SK-N-SH (cell line): ENCODE measurements at regions of chr3 and their contacts with region 1.

Region 1: DNA sequence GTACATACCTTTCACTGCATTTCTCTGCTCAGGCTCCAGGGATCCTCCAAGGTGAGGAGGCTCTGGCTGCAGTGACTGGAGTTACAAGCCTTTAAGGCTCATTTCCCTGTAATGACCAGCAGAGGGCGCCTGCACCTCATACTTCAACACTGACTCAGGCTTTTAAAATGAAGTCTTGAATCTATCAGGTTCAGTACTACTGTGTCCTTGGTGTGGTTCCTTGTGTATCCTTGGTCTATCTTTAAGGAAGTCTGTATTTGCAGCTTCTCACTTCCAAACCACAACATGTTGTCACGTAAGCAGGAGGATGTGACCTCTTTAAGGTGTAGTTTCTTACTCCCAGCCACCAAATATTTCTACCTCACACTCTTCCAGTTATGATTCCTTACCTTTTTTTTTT is 122.5 kb upstream of the ZBED2 start:
- DNase-seq: peak; percentile 61
- H3K4me3 ChIP-seq: no peak overlapping the region; a peak in 1 of 4 replicates
- H3K27ac ChIP-seq: peak overlapping the region in 1 of 2 experiments; percentile 30; a peak in 1 of 4 replicates
- H3K4me1 ChIP-seq: peaks cover 8 to 10% of the 10 kb centered on the region in 2 experiments
- H3K27me3 ChIP-seq: no peaks in the 10 kb centered on the region
- CTCF ChIP-seq: peak; percentile 93
- EP300 ChIP-seq: no peak
- RAD21 ChIP-seq: peak; percentile 95

Region 2: DNA sequence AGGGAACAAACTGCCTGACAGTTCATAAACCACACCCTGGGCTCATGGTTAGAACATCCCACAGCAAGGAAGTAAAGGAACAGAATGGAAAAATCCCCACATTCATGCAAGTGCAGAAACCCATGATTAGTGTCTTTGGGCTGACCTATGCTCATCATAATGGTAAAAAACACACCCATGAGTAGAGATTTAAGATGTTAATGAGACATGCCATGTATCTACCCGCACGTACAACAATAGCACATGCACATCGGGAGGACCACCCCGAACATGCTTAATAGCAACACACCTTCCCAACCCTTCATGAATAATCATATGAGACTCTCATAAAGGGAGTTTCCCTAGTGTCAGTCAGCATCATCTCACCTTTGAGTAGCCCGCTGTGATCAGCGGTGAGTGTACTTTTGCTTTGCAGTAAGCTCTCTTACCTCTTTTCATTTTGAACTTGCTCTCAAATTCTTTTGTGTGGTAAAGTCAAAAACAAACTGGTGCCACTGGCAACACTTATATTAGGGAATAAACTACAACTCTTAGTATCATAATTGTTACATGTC is 145.6 kb before region 1 on chr3:
- CTCF ChIA-PET with region 1: no interaction called
- POLR2A ChIA-PET with region 1: no interaction called
- DNase-seq: no peak
- H3K4me3 ChIP-seq: no peak overlapping the region
- H3K27ac ChIP-seq: no peak overlapping the region
- H3K4me1 ChIP-seq: peaks cover 3 to 13% of the 10 kb centered on the region in 2 experiments; a peak in 2 of 4 replicates
- H3K27me3 ChIP-seq: no peaks in the 10 kb centered on the region
- CTCF ChIP-seq: no peak
- EP300 ChIP-seq: no peak
- RAD21 ChIP-seq: no peak

Region 3: GRCh38 chr3:111681661-111682426 is 35.8 kb before region 1 on chr3:
- CTCF ChIA-PET with region 1: interaction called, 28 read pairs
- POLR2A ChIA-PET with region 1: no interaction called
- DNase-seq: no peak
- H3K4me3 ChIP-seq: no peak overlapping the region
- H3K27ac ChIP-seq: no peak overlapping the region
- H3K4me1 ChIP-seq: peaks cover 6 to 17% of the 10 kb centered on the region in 2 experiments; a peak in 2 of 4 replicates
- H3K27me3 ChIP-seq: no peaks in the 10 kb centered on the region
- CTCF ChIP-seq: no peak
- EP300 ChIP-seq: no peak
- RAD21 ChIP-seq: no peak

Region 4: DNA sequence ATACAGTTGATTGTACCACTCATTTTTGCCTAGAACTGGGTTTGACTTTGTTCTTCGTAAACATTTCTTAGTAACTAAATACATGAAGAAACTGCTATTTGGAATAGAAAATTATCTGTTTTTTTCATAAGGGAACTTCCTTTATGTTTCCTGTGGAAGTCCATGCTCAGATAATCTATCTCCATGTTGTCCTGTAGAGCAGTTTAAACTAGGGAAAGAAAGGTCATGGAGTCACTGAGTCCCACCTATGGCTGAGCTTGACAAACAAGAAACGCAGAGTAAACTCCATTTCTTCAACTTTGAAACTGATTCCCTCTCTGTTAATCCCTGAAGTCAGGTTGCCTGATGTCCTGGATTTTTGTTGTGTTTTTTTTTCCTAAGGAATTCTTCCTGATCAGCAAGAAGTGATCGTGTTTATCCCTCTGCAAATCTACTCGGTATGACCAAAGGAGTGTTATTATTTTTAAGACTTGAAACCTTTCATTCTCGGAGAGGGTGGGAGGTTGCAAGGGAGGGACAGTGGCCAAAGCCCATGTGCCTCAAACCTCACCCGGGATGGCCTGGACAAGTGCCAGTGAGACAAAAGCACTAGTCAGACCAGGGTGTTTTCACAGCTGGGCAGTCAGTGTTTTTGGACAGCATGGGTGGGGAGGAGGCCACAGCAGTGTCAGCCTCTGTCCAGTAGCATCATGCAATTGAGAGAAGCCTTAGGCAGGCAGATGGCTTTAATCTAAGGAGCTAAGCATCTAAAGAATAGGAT is 11.7 kb after region 1 on chr3:
- CTCF ChIA-PET with region 1: interaction called, 37 read pairs
- POLR2A ChIA-PET with region 1: no interaction called
- DNase-seq: no peak
- H3K4me3 ChIP-seq: no peak overlapping the region
- H3K27ac ChIP-seq: peak overlapping the region in 1 of 2 experiments; percentile 18; a peak in 2 of 4 replicates
- H3K4me1 ChIP-seq: peaks cover 0 to 23% of the 10 kb centered on the region in 2 experiments; a peak in 3 of 4 replicates
- H3K27me3 ChIP-seq: no peaks in the 10 kb centered on the region
- CTCF ChIP-seq: no peak
- EP300 ChIP-seq: peak in 1 of 2 experiments; percentile 14; a peak in 1 of 4 replicates
- RAD21 ChIP-seq: no peak

Region 5: GRCh38 chr3:111949712-111950111 is 232.1 kb after region 1 on chr3:
- CTCF ChIA-PET with region 1: interaction called, 21 read pairs
- POLR2A ChIA-PET with region 1: no interaction called
- DNase-seq: no peak
- H3K4me3 ChIP-seq: no peak overlapping the region
- H3K27ac ChIP-seq: no peak overlapping the region
- H3K4me1 ChIP-seq: peaks cover 8 to 18% of the 10 kb centered on the region in 2 experiments; a peak in 2 of 4 replicates
- H3K27me3 ChIP-seq: no peaks in the 10 kb centered on the region
- CTCF ChIP-seq: no peak
- EP300 ChIP-seq: no peak
- RAD21 ChIP-seq: no peak

Region 6: GRCh38 chr3:111967651-111968274 is 250.2 kb after region 1 on chr3:
- CTCF ChIA-PET with region 1: interaction called, 255 read pairs
- POLR2A ChIA-PET with region 1: no interaction called
- DNase-seq: peak; percentile 46
- H3K4me3 ChIP-seq: peak overlapping the region in 1 of 2 experiments; percentile 10; a peak in 1 of 4 replicates
- H3K27ac ChIP-seq: peak overlapping the region in 1 of 2 experiments; percentile 50; a peak in 1 of 4 replicates
- H3K4me1 ChIP-seq: peaks cover 2 to 7% of the 10 kb centered on the region in 2 experiments; a peak in 2 of 4 replicates
- H3K27me3 ChIP-seq: no peaks in the 10 kb centered on the region
- CTCF ChIP-seq: peak; percentile 87
- EP300 ChIP-seq: no peak
- RAD21 ChIP-seq: peak; percentile 93

Region 7: DNA sequence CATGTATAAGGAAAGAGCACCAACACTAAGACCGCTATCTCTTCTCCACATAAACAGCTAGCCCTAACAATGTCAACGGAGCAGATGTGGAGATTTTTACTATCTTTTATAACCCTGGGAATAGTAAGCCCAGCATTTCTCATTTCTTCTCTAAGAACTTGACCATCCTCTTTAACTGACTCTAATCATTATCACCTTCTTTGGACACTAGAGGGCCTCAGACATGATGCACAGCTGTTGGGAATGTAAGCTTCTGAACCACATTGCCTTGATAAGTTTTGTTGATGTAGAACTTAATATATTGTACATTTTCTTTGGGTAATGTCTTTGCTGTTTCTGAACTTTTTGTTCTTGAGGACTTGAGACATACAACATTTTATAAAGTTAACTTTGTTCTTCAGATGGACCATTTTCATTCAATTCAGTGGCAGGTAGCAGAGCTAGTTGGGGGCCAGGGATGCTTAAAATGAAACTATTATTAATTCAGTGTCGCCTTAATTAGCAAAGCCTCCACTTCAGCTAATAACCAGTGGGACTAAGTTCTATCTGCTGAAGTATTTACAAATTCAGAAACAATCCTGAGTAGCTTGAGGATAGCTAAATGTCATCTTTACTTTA is 271.6 kb after region 1 on chr3:
- CTCF ChIA-PET with region 1: interaction called, 22 read pairs
- POLR2A ChIA-PET with region 1: no interaction called
- DNase-seq: peak; percentile 57
- H3K4me3 ChIP-seq: peak overlapping the region in 1 of 2 experiments; percentile 5; a peak in 1 of 4 replicates
- H3K27ac ChIP-seq: 0 out of 4 replicates have a peak overlapping the region, but pooled peaks of 1 of the 2 experiments have one; percentile 7
- H3K4me1 ChIP-seq: peaks cover 0 to 5% of the 10 kb centered on the region in 2 experiments; a peak in 1 of 4 replicates
- H3K27me3 ChIP-seq: no peaks in the 10 kb centered on the region
- CTCF ChIP-seq: peak; percentile 86
- EP300 ChIP-seq: no peak
- RAD21 ChIP-seq: peak; percentile 77

Region 8: DNA sequence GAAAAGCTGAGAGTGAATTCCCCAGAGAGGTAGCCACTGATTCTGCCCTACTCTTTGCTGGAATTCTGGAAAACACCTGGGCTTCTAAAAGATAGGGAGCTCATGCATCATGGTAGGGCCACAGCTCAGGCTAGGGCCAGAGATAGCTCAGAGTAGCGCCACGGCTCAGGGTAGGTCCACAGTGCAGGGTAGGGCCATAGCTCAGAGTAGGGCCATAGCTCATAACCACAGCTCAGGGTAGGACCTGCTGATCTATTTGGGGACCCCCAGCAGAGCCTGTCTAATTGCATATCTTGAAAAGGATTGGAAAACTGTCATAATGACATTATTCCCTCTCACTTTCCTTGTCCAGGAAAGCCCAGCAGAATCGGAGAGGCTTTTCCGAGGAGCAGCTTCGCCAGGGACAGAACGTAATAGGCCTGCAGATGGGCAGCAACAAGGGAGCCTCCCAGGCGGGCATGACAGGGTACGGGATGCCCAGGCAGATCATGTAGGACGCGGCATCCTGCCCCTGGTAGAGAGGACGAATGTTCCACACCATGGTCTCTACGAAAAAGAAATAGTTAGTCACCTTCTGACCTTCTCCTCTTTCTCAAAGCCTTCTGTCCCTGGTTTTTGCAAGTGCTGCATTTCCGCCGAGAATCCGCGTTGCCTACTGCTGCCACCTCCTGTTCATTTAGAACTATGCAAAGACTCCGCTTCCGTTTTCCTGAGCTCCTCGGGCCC is 295.6 kb after region 1 on chr3:
- CTCF ChIA-PET with region 1: interaction called, 17 read pairs
- POLR2A ChIA-PET with region 1: no interaction called
- DNase-seq: peak; percentile 48
- H3K4me3 ChIP-seq: no peak overlapping the region
- H3K27ac ChIP-seq: no peak overlapping the region
- H3K4me1 ChIP-seq: peaks cover 3 to 8% of the 10 kb centered on the region in 2 experiments; a peak in 2 of 4 replicates
- H3K27me3 ChIP-seq: no peaks in the 10 kb centered on the region
- CTCF ChIP-seq: peak; percentile 66
- EP300 ChIP-seq: no peak
- RAD21 ChIP-seq: peak; percentile 81